Dendritic cell treated with granulocyte-macrophage colony-stimulating factor and Interleukin-4, amounts not matched to agents 40 ng/mL and 50 ng/mL, for 4 days (primary cell): ENCODE measurements at regions of chr1 and their contacts with region 1.

Region 1: GRCh38 chr1:80181418-80181817 is 1174.9 kb upstream of the ADGRL4 start:
- H3K4me3 Mint-ChIP-seq: no peak overlapping the region
- H3K27ac Mint-ChIP-seq: no peak overlapping the region
- H3K4me1 Mint-ChIP-seq: no peaks in the 10 kb centered on the region
- H3K27me3 Mint-ChIP-seq: no peaks in the 10 kb centered on the region

Region 2: DNA sequence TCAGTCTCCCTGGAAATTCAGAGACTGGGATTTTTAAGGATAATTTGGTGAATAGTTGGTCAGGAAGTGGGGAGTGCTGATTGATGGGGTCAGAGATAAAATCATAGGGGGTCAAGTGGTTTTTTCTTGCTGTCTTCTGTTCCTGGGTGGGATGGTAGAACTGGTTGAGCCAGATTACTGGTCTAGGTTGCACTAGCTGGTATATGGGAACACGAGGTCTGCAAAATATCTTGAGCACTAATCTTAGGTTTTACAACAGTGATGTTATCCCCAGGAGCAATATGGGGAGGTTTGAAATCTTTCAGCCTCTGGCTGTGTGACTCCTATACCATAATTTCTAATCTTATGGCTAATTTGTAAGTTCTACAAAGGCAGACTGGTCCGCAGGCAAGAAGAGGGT is 21.2 kb before region 1 on chr1:
- intact Hi-C with region 1: loop called (anchors 2 kb)
- H3K4me3 Mint-ChIP-seq: no peak overlapping the region
- H3K27ac Mint-ChIP-seq: no peak overlapping the region
- H3K4me1 Mint-ChIP-seq: no peaks in the 10 kb centered on the region
- H3K27me3 Mint-ChIP-seq: no peaks in the 10 kb centered on the region